Esophagus muscularis mucosa (tissue), 4 donors: ENCODE measurements at regions of chr2 and their contacts with region 1.

Region 1: DNA sequence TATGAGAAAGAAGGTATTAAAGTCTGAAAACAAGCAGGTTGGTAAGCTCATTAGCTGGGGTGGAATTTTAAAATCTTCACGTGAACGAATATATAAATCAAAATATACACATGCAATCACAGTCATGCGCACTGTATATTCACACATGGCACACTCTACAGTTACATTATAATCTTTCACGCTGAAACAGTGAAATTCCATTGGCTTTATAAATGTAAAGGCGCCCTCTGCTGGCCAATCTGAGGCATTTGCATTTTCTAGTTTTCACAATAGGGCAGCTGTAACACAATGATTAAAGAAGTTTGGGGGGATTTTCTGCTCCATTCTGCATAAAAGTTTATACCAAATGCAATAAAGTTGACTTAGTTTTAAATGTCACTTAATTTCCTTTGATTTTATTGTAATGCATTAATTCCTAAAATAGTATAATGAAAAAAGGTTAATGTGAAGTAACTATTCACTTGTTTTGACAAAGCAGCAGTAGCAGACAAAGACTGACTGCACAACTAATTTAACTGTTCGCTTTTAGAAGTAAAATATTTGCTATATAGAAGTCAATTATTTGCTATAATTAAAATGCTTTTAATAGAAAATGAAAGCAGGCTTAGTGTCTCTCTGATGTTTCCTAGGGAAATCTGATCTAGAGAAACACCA is 17.2 kb downstream of the IFIH1 start:
- DNase-seq: no peak
- H3K4me3 ChIP-seq: no peak overlapping the region
- H3K27ac ChIP-seq: no peak overlapping the region
- H3K4me1 ChIP-seq: peaks cover 0 to 30% (median 17%) of the 10 kb centered on the region in 4 donors
- H3K27me3 ChIP-seq: no peaks in the 10 kb centered on the region
- CTCF ChIP-seq: peak; percentile 79 to 89 (median 88)
- EP300 ChIP-seq: no peak
- POLR2A ChIP-seq: no peak

Region 2: DNA sequence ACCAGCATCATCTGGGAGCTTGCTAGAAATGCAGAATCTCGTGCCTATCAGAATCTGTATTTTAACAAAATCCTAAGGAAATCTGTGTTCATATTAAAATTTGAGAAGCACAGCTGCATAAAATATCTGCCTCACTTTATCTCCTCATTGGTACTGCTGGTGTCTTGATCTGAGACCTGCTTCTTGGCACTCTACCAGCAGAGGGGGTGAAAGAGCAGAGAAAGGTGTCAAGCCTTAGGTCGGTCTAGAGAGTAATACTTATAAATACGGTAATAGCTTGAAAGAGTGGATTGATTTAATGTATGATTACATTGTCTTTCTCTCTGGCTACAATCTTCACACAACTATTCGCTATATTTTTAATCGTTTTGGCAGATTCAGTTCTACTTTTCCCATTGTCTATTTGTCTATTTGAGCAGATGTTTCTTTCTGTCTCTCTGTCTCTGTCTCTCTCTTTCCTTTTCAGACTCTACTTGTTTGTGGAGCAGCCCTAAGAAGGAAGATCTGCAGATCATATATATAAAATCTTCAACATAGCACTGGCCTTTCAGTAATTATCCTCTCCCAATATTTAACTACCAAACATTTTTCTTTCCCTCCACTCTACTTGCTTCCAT is 147.6 kb before region 1 on chr2:
- intact Hi-C with region 1: loop called (anchors 2 kb)
- DNase-seq: no peak
- H3K4me3 ChIP-seq: no peak overlapping the region
- H3K27ac ChIP-seq: no peak overlapping the region
- H3K4me1 ChIP-seq: no peaks in the 10 kb centered on the region
- H3K27me3 ChIP-seq: no peaks in the 10 kb centered on the region
- CTCF ChIP-seq: peak; percentile 53 to 65 (median 58)
- EP300 ChIP-seq: no peak
- POLR2A ChIP-seq: no peak

Region 3: GRCh38 chr2:162210385-162210784 is 90.9 kb before region 1 on chr2:
- intact Hi-C with region 1: no loop called
- DNase-seq: no peak
- H3K4me3 ChIP-seq: no peak overlapping the region
- H3K27ac ChIP-seq: peak overlapping the region in 1 of 4 donors; percentile 59
- H3K4me1 ChIP-seq: peaks cover 0 to 21% (median 16%) of the 10 kb centered on the region in 4 donors
- H3K27me3 ChIP-seq: no peaks in the 10 kb centered on the region
- CTCF ChIP-seq: no peak
- EP300 ChIP-seq: no peak
- POLR2A ChIP-seq: no peak

Region 4: DNA sequence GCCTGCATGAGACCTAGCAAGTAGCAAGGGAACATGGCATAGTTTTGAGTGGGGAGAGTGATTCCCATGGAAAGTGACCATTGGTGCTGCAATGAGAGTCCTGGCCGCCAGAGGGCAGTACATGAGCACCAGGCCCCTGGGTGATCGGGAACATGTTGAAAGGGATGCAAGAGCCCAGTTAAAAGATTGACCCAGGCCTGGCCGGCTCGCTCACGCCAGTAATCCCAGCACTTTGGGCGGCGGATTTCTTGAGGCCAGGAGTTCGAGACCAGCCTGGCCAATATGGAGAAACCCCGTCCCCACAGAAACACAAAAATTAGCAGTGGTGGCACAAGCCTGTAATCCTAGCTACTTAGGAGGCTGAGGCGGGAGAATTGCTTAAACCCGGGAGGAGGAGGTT is 80.2 kb before region 1 on chr2:
- intact Hi-C with region 1: loop called (anchors 5 kb)
- DNase-seq: no peak
- H3K4me3 ChIP-seq: no peak overlapping the region
- H3K27ac ChIP-seq: no peak overlapping the region
- H3K4me1 ChIP-seq: peaks cover 7 to 37% (median 25%) of the 10 kb centered on the region in 4 donors
- H3K27me3 ChIP-seq: no peaks in the 10 kb centered on the region
- CTCF ChIP-seq: peak; percentile 55 to 76 (median 61)
- EP300 ChIP-seq: no peak
- POLR2A ChIP-seq: no peak